ENCODE measurements at regions of chr5 and their contacts with region 1.

Region 1: GRCh38 chr5:139417214-139417613 is 13.3 kb upstream of the SPATA24 start:
- DNase-seq: peak in 1 of 2 donors; percentile 59
- H3K4me3 ChIP-seq: no peak overlapping the region
- H3K27ac ChIP-seq: peak overlapping the region; percentile 51 to 57
- H3K4me1 ChIP-seq: peaks cover 0 to 7% of the 10 kb centered on the region in 2 donors
- H3K27me3 ChIP-seq: no peaks in the 10 kb centered on the region
- CTCF ChIP-seq: no peak
- POLR2A ChIP-seq: no peak

Region 2: GRCh38 chr5:139517683-139518564 is 100.7 kb after region 1 on chr5:
- intact Hi-C with region 1: loop called (anchors 5 kb)
- DNase-seq: peak; percentile 90 to 96
- H3K4me3 ChIP-seq: peak overlapping the region; percentile 48 to 49
- H3K27ac ChIP-seq: peak overlapping the region; percentile 86 to 89
- H3K4me1 ChIP-seq: no peaks in the 10 kb centered on the region
- H3K27me3 ChIP-seq: no peaks in the 10 kb centered on the region
- CTCF ChIP-seq: peak; percentile 96 to 99 (median 98)
- POLR2A ChIP-seq: peak; percentile 69 to 70

Region 3: DNA sequence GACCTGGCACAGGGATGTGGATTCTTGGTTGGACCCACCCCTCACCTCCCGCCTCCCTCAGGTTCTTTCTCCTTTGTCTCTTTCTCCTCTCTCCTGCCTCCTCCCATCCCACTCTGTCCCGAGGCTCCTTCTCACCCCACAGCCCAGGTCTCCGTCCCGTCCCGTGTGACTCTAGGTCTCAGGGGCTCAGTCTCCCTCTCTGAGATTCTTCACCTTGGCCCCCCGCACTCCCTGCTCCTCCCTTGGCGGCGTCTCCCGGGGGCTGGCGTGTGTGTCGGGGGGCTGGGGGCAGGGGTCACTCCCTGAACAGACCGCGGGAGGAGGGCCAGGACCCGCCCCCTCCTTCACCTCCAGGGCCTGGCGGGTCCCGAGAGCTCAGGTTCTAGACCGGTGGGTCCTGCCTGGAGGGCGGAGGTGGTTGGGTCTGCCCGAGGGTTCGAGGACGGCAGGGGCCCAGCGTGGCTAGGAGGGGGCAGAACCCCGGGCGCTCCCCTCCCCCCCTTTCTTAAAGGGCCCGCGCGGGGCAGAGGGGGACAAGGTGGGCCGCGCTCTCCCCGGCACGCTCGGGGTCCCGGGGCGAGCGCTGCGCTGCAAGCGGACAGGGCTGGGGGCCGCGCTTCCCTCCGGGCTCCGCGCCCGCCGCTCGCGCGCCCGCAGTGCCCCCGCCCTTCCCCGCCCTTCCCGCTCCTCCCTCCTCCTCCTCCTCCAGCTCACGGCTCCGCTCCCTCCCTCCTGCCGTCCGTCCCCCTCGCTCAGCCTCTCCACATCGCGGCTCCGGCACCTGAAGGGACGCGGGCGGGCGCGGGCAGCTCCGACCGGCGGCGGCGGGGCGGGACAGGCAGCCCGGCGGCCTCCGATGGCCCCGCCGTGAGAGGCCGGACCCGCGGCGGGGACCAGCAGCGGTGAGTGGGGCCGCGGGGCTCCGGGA is 378.1 kb after region 1 on chr5 and contains the start of gene PSD2:
- intact Hi-C with region 1: no loop called
- DNase-seq: peak in 1 of 2 donors; percentile 35
- H3K4me3 ChIP-seq: peak within 1 kb of the TSS in 1 of 2 donors; percentile 34
- H3K27ac ChIP-seq: no peak within 1 kb of the TSS
- H3K4me1 ChIP-seq: peaks cover 0 to 13% of the 10 kb centered on the region in 2 donors
- H3K27me3 ChIP-seq: peaks cover 0 to 12% of the 10 kb centered on the region in 2 donors
- CTCF ChIP-seq: no peak
- POLR2A ChIP-seq: no peak
- total RNA-seq, gene PSD2: 0.30 to 0.76 TPM in 2 of 4 donors, not detected in the others